Motor neuron (in vitro differentiated cells): ENCODE measurements at regions of chr6 and their contacts with region 1.

Region 1: GRCh38 chr6:154653853-154654252 is 79.4 kb upstream of the SCAF8 start:
- ATAC-seq: peak in 3 of 8 experiments; percentile 62 to 99 (median 99)
- H3K4me3 ChIP-seq: no peak overlapping the region
- H3K27ac ChIP-seq: no peak overlapping the region
- H3K4me1 ChIP-seq: no peaks in the 10 kb centered on the region

Region 2: GRCh38 chr6:154386848-154387717 is 266.8 kb before region 1 on chr6:
- in situ Hi-C with region 1: loop called in 1 of 9 experiments (anchors 25 kb)
- ATAC-seq: peak in 3 of 8 experiments; percentile 80 to 98 (median 97)
- H3K4me3 ChIP-seq: no peak overlapping the region
- H3K27ac ChIP-seq: no peak overlapping the region
- H3K4me1 ChIP-seq: no peaks in the 10 kb centered on the region

Region 3: GRCh38 chr6:154510143-154510905 is 143.5 kb before region 1 on chr6 and contains the start of gene CNKSR3:
- in situ Hi-C with region 1: loop called in 1 of 9 experiments (anchors 25 kb)
- ATAC-seq: peak; percentile 77 to 89 (median 86)
- H3K4me3 ChIP-seq: peak within 1 kb of the TSS; percentile 55 to 63 (median 61)
- H3K27ac ChIP-seq: peak within 1 kb of the TSS; percentile 37 to 72
- H3K4me1 ChIP-seq: peaks cover 8 to 9% of the 10 kb centered on the region in 2 donors
- total RNA-seq, gene CNKSR3: 2.0 to 21.5 (median 3.5) TPM